Caco-2 (cell line): ENCODE measurements at regions of chr9 and their contacts with region 1.

Region 1: GRCh38 chr9:4143936-4144717 is 155.7 kb downstream of the GLIS3 start:
- DNase-seq: peak; percentile 62 to 81
- H3K4me3 ChIP-seq: no peak overlapping the region
- H3K4me3 Mint-ChIP-seq: peak overlapping the region; percentile 78
- H3K27ac Mint-ChIP-seq: peak overlapping the region; percentile 96
- H3K4me1 ChIP-seq: peaks cover 83% of the 10 kb centered on the region
- H3K4me1 Mint-ChIP-seq: peaks cover 42% of the 10 kb centered on the region
- H3K27me3 ChIP-seq: no peaks in the 10 kb centered on the region
- H3K27me3 Mint-ChIP-seq: no peaks in the 10 kb centered on the region
- CTCF ChIP-seq: no peak

Region 2: DNA sequence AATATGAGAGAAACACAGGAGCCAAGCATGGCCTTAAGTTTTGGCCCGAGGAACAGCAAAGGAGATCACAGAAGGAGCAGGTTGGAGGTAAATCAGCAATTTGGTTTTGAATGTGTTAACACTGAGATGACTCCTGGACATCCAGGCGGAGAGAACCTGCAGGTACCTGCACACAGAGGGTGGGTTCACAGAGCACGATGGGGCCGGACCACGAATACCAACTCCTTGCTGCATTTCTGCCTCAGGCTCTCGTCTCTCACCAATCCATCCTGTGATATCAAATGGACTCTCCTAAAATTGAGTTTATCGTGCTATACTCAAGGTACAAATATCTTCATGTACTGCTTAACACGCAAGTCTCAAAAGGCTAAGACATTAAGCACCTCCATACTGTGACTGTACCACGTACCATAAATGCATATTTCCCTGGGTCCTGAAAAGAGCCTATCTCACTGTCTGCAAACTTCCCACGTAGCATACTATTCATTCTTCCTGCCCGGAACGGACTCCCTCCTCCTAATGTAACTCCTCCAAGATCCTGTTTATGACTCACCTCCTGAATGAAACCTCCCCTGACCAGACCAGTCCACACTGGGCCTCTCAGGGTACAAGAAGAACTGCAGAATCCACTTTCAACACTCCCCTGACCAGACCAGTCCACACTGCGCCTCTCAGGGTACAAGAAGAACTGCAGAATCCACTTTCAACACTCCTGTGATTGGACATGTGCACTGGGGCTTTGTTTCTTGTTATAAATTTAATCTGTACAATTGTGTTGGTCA is 237.5 kb before region 1 on chr9:
- CTCF ChIA-PET with region 1: no interaction called
- POLR2A ChIA-PET with region 1: no interaction called
- intact Hi-C with region 1: loop called (anchors 10 kb)
- DNase-seq: peak; percentile 24 to 62
- H3K4me3 ChIP-seq: no peak overlapping the region
- H3K4me3 Mint-ChIP-seq: no peak overlapping the region
- H3K27ac Mint-ChIP-seq: peak overlapping the region; percentile 14
- H3K4me1 ChIP-seq: peaks cover 32% of the 10 kb centered on the region
- H3K4me1 Mint-ChIP-seq: peaks cover 30% of the 10 kb centered on the region
- H3K27me3 ChIP-seq: no peaks in the 10 kb centered on the region
- H3K27me3 Mint-ChIP-seq: no peaks in the 10 kb centered on the region
- CTCF ChIP-seq: no peak

Region 3: GRCh38 chr9:4077499-4078102 is 66.5 kb before region 1 on chr9:
- CTCF ChIA-PET with region 1: no interaction called
- POLR2A ChIA-PET with region 1: no interaction called
- intact Hi-C with region 1: loop called (anchors 5 kb)
- DNase-seq: peak; percentile 49 to 69
- H3K4me3 ChIP-seq: no peak overlapping the region
- H3K4me3 Mint-ChIP-seq: no peak overlapping the region
- H3K27ac Mint-ChIP-seq: no peak overlapping the region
- H3K4me1 ChIP-seq: peaks cover 20% of the 10 kb centered on the region
- H3K4me1 Mint-ChIP-seq: peaks cover 26% of the 10 kb centered on the region
- H3K27me3 ChIP-seq: no peaks in the 10 kb centered on the region
- H3K27me3 Mint-ChIP-seq: no peaks in the 10 kb centered on the region
- CTCF ChIP-seq: peak; percentile 36 to 50

Region 4: GRCh38 chr9:4182831-4183230 is 38.7 kb after region 1 on chr9:
- CTCF ChIA-PET with region 1: no interaction called
- POLR2A ChIA-PET with region 1: no interaction called
- intact Hi-C with region 1: no loop called
- DNase-seq: no peak
- H3K4me3 ChIP-seq: no peak overlapping the region
- H3K4me3 Mint-ChIP-seq: no peak overlapping the region
- H3K27ac Mint-ChIP-seq: no peak overlapping the region
- H3K4me1 ChIP-seq: peaks cover 5% of the 10 kb centered on the region; the same call in 1 of the 2 replicates
- H3K4me1 Mint-ChIP-seq: no peaks in the 10 kb centered on the region
- H3K27me3 ChIP-seq: no peaks in the 10 kb centered on the region
- H3K27me3 Mint-ChIP-seq: no peaks in the 10 kb centered on the region
- CTCF ChIP-seq: no peak

Region 5: DNA sequence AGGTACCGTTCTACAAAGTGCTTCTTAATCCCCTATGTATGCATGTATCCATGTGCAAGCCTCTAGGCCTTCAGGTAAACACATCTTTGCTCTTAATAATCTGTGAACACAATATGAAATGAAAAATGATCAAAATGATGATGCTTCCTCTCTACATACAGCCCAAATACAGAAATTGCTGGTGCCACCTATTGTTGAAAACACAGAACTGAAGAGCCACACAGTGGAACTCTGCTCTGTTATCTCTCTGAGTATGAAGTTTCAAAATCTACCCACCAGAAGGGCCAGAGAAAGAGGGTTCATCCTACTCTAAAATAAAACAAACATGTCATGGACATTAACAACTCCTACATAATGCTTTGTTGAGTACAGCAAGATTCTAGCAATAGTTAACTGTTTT is 84.5 kb after region 1 on chr9:
- CTCF ChIA-PET with region 1: no interaction called
- POLR2A ChIA-PET with region 1: no interaction called
- intact Hi-C with region 1: loop called (anchors 5 kb)
- DNase-seq: peak in 1 of 2 experiments; percentile 11
- H3K4me3 ChIP-seq: no peak overlapping the region
- H3K4me3 Mint-ChIP-seq: no peak overlapping the region
- H3K27ac Mint-ChIP-seq: no peak overlapping the region
- H3K4me1 ChIP-seq: peaks cover 21% of the 10 kb centered on the region
- H3K4me1 Mint-ChIP-seq: peaks cover 2% of the 10 kb centered on the region
- H3K27me3 ChIP-seq: no peaks in the 10 kb centered on the region
- H3K27me3 Mint-ChIP-seq: no peaks in the 10 kb centered on the region
- CTCF ChIP-seq: peak in 1 of 2 experiments; percentile 44

Region 6: GRCh38 chr9:4297151-4297785 is 153.1 kb after region 1 on chr9:
- CTCF ChIA-PET with region 1: no interaction called
- POLR2A ChIA-PET with region 1: interaction called, 3 read pairs
- intact Hi-C with region 1: loop called (anchors 5 kb)
- DNase-seq: peak; percentile 79 to 84
- H3K4me3 ChIP-seq: peak overlapping the region; percentile 66
- H3K4me3 Mint-ChIP-seq: peak overlapping the region; percentile 84
- H3K27ac Mint-ChIP-seq: peak overlapping the region; percentile 69
- H3K4me1 ChIP-seq: peaks cover 21% of the 10 kb centered on the region
- H3K4me1 Mint-ChIP-seq: no peaks in the 10 kb centered on the region
- H3K27me3 ChIP-seq: no peaks in the 10 kb centered on the region
- H3K27me3 Mint-ChIP-seq: no peaks in the 10 kb centered on the region
- CTCF ChIP-seq: peak in 1 of 2 experiments; percentile 33